Heart right ventricle (tissue), 16 donors: ENCODE measurements at regions of chr18 and their contacts with region 1.

Region 1: DNA sequence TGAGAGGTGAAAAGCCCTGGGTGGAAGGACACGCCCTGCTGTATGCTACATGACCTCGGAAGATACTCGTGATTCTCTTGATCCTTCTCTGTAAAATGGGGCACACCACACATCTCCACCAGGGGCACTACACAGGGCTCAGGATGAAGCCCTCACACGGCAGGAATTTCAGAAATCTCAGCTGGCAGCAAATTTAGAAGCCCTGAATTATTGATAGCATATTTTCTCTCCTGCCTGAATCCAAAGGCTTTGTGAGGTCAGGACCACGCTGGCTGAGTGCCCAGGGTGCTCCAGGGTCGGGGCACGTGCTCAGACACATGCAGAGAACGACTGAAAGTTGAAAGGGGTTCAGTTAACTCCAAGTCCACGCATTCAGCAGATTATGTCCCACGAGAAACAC is 42.1 kb upstream of the GALR1 start:
- DNase-seq: peak; percentile 24 to 57
- ATAC-seq: peak in 7 of 8 donors; percentile 40 to 63 (median 54)
- H3K4me3 ChIP-seq: no peak overlapping the region
- H3K27ac ChIP-seq: peak overlapping the region in 6 of 10 donors; percentile 4 to 80 (median 24)
- H3K4me1 ChIP-seq: peaks cover 3 to 43% (median 16%) of the 10 kb centered on the region in 9 donors
- H3K27me3 ChIP-seq: no peaks in the 10 kb centered on the region
- CTCF ChIP-seq: peak in 8 of 9 donors; percentile 20 to 60 (median 48)

Region 2: GRCh38 chr18:76709659-76710645 is 497.6 kb before region 1 on chr18:
- intact Hi-C with region 1: no loop called
- DNase-seq: peak; percentile 46 to 56
- ATAC-seq: peak; percentile 73 to 85 (median 81)
- H3K4me3 ChIP-seq: peak overlapping the region in 1 of 10 donors; percentile 23
- H3K27ac ChIP-seq: no peak overlapping the region
- H3K4me1 ChIP-seq: peaks cover 0 to 7% (median 0%) of the 10 kb centered on the region in 9 donors
- H3K27me3 ChIP-seq: no peaks in the 10 kb centered on the region
- CTCF ChIP-seq: peak; percentile 89 to 95 (median 91)

Region 3: GRCh38 chr18:76914314-76914713 is 293.2 kb before region 1 on chr18:
- intact Hi-C with region 1: no loop called
- DNase-seq: no peak
- ATAC-seq: no peak
- H3K4me3 ChIP-seq: no peak overlapping the region
- H3K27ac ChIP-seq: no peak overlapping the region
- H3K4me1 ChIP-seq: no peaks in the 10 kb centered on the region
- H3K27me3 ChIP-seq: no peaks in the 10 kb centered on the region
- CTCF ChIP-seq: no peak

Region 4: GRCh38 chr18:76982841-76983587 is 224.5 kb before region 1 on chr18:
- intact Hi-C with region 1: loop called in 1 of 10 experiments (anchors 5 kb)
- DNase-seq: peak; percentile 75 to 85
- ATAC-seq: peak in 7 of 8 donors; percentile 77 to 87 (median 80)
- H3K4me3 ChIP-seq: no peak overlapping the region
- H3K27ac ChIP-seq: no peak overlapping the region
- H3K4me1 ChIP-seq: peaks cover 0 to 20% (median 3%) of the 10 kb centered on the region in 9 donors
- H3K27me3 ChIP-seq: no peaks in the 10 kb centered on the region
- CTCF ChIP-seq: peak; percentile 74 to 97 (median 91)

Region 5: DNA sequence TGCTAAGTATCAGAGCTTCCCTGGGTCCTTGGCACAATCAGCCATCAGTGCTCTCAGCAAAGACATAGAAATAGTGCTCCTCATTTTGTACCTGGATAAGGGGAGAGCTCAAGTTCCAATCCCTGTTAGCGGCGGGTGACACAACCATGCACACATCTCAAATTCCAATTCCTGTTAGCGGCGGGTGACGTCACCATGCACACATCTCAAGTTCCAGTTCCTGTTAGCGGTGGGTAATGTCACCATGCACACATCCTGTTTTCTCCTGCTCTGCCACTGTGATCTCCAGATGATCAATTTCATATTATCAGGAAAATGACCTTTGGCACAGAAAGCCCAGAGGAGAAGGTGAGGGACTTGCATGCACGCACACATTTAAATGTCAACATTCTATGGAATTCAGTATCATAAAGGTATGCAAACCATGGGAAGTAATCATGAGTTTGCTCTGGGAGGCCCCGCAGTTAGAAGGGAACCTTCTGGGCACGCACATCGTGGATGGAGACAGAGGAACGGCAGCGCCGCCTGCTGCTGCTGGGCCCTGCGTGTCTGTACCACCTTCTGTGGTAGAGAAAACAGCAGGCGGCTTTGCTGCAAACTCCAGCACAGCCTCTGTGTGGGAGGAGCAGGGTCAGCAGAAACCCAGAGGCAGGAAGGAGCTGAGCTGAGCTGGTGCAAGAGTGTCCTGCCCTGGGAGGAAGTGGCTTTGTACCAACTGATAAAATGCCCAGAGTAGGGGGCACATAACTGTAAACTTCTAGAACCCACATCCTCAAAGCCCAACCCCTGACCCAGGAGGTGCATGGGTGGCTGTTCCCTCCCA is 152.7 kb before region 1 on chr18:
- intact Hi-C with region 1: loop called in 4 of 10 experiments (anchors 5 to 10 kb)
- DNase-seq: peak; percentile 80 to 81
- ATAC-seq: peak; percentile 76 to 83 (median 81)
- H3K4me3 ChIP-seq: peak overlapping the region in 1 of 10 donors; percentile 42
- H3K27ac ChIP-seq: peak overlapping the region in 9 of 10 donors; percentile 54 to 98 (median 76)
- H3K4me1 ChIP-seq: peaks cover 15 to 93% (median 52%) of the 10 kb centered on the region in 9 donors
- H3K27me3 ChIP-seq: no peaks in the 10 kb centered on the region
- CTCF ChIP-seq: peak in 8 of 9 donors; percentile 46 to 77 (median 64)

Region 6: DNA sequence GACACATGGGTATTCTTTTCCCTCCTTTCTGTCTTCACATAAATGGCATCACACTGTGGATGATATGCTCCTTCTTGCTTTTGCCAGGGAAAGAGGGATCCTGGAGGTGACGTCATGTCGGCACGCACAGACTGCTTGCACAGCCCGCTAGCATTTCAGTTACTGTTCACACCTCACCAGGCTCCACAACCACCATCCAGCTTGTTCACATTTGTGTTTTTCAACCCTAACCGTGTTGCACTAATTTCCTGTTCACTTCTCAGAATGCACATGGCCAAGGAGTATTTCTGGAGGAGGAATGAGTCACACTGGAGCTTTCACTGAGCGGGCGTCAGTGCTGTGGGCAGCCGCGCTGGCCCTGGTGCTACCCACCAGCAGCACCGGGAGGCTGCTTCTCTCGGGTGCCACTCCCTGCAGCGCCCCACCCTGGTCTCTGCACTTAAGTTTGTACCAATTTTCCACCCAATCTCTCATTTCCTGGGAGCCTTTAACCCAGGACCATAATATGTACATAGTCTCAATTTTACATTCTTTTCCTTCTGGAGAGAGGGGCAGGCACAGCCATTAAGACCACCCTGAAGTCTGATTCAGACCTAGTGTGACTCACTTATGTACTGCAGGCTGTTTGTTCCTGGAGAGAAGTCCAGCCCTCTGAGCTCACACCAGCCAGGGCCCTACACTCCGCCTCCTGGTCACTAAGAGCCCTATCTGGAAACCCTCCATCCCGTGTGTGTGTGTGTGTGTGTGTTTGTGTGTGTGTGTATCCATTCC is 140.1 kb before region 1 on chr18:
- intact Hi-C with region 1: loop called in 3 of 10 experiments (anchors 5 to 10 kb)
- DNase-seq: peak; percentile 45 to 58
- ATAC-seq: peak; percentile 39 to 82 (median 72)
- H3K4me3 ChIP-seq: peak overlapping the region in 1 of 10 donors; percentile 8
- H3K27ac ChIP-seq: peak overlapping the region in 9 of 10 donors; percentile 57 to 91 (median 78)
- H3K4me1 ChIP-seq: peaks cover 8 to 100% (median 66%) of the 10 kb centered on the region in 9 donors
- H3K27me3 ChIP-seq: no peaks in the 10 kb centered on the region
- CTCF ChIP-seq: peak in 2 of 9 donors; percentile 3 to 9

Region 7: GRCh38 chr18:77132371-77133050 is 75.0 kb before region 1 on chr18 and contains the start of gene MBP:
- intact Hi-C with region 1: loop called in 2 of 10 experiments (anchors 10 kb)
- DNase-seq: peak; percentile 50 to 59
- ATAC-seq: peak; percentile 17 to 64 (median 58)
- H3K4me3 ChIP-seq: peak within 1 kb of the TSS; percentile 54 to 92 (median 84)
- H3K27ac ChIP-seq: peak within 1 kb of the TSS; percentile 62 to 99 (median 90)
- H3K4me1 ChIP-seq: peaks cover 5 to 61% (median 48%) of the 10 kb centered on the region in 9 donors
- H3K27me3 ChIP-seq: peaks cover 0 to 41% (median 12%) of the 10 kb centered on the region in 7 donors
- CTCF ChIP-seq: no peak
- total RNA-seq, gene MBP: 18.4 to 70.8 (median 52.6) TPM

Region 8: GRCh38 chr18:77650799-77651385 is 443.4 kb after region 1 on chr18:
- intact Hi-C with region 1: loop called in 1 of 10 experiments (anchors 10 kb)
- DNase-seq: peak; percentile 63 to 80
- ATAC-seq: peak; percentile 83 to 96 (median 92)
- H3K4me3 ChIP-seq: peak overlapping the region in 1 of 10 donors; percentile 8
- H3K27ac ChIP-seq: no peak overlapping the region
- H3K4me1 ChIP-seq: peaks cover 0 to 7% (median 0%) of the 10 kb centered on the region in 9 donors
- H3K27me3 ChIP-seq: peaks cover 0 to 18% (median 12%) of the 10 kb centered on the region in 7 donors
- CTCF ChIP-seq: peak; percentile 69 to 95 (median 89)